ENCODE measurements at regions of chr11 and their contacts with region 1.

Region 1: DNA sequence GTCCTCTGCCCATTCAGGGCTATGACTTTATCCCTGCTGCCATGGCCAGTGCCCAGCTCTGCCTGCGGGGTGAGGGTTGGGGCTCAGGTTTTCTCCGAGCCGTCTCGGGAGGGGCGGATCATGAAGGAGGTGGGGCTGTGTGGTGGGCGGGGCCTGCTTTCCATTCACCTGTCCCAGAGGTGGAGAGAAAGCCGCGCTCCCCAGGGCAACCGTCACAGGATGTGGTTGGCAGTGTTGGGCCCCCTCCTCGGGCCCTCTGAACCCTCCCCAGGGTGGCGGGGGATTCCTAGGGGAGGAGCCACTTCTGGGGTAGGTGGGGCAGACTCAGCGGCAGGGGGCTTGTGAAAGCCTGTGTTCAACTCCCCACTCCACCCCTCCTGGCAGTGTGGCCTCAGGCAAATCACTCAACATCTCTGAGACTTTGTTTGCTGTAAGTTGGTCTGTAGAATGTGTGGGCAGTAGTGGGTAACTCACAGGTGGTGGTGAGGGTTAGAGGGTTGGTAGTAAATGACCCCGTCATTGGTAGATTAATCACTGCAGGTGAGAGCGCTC is 50.3 kb downstream of the CD6 start:
- DNase-seq: peak; percentile 94
- H3K4me3 Mint-ChIP-seq: peak overlapping the region; percentile 75
- H3K27ac Mint-ChIP-seq: peak overlapping the region; percentile 99
- H3K4me1 Mint-ChIP-seq: peaks cover 89% of the 10 kb centered on the region
- H3K27me3 Mint-ChIP-seq: no peaks in the 10 kb centered on the region

Region 2: DNA sequence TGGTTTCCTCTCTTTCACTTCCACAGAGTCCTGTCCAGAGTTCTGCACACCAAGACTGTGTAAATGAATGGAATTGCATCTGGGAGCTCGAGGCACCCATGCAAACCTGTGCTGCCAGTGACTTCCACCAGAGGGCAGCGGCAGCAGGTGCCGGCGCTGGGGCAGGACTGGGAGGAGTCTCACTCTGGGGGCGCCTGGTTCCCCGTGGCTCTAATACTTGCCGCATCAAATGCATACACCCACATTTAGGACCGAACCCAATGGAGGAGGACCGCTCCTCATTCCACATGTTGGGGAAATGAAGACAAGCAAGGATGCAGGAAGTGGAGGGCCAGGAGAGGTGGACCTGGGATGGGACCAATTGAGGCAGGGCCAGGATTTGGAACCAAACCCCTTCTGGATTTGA is 51.4 kb before region 1 on chr11:
- CTCF ChIA-PET with region 1: interaction called, 8 read pairs
- POLR2A ChIA-PET with region 1: interaction called, 18 read pairs
- intact Hi-C with region 1: loop called (anchors 2 kb)
- DNase-seq: peak; percentile 89
- H3K4me3 Mint-ChIP-seq: peak overlapping the region; percentile 95
- H3K27ac Mint-ChIP-seq: peak overlapping the region; percentile 99
- H3K4me1 Mint-ChIP-seq: peaks cover 15% of the 10 kb centered on the region
- H3K27me3 Mint-ChIP-seq: no peaks in the 10 kb centered on the region

Region 3: DNA sequence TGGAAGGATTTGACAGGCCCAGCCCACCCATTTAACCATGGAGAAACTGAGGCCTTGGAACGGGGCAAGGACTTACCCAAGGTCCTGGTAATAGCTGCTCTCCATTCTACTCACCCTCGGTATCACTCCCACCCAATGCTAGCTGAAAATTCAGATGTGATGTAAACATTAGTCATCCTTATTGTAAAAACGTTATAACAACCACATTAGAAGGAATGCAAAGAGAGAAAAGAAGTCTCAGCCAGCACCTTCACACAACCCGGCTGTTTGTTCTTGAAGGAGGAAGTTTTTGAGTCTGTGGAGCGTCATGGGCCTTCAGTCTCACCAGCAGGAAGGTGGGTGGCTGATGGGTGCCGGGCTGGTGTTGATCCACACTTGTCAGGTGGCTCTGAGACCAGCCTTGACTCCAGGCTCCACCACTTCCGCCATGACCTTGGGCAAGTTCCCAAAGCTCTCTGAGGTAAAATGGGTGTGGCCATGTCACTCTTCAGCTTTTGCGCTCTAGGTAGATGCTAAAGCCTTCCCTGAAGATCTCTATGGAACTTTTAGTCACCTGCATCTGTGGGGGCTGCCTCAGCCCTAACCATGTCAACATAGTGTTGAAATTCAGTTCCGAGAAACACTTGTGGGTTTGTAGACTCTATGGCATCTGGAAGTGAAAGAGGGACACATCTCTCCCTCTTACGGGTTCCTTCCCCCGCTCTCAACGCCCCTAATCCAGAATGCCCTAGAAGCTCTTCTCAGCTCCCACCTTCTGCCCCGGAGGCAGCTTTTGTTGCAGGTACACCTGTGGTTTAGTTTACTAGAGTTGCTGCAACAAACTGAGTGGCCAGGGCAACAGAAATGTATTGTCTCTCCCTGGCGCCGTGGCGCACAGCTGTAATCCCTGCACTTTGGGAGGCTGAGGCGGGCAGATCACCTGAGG is 35.5 kb before region 1 on chr11:
- CTCF ChIA-PET with region 1: no interaction called
- POLR2A ChIA-PET with region 1: interaction called, 36 read pairs
- intact Hi-C with region 1: loop called (anchors 2 kb)
- DNase-seq: peak; percentile 97
- H3K4me3 Mint-ChIP-seq: peak overlapping the region; percentile 84
- H3K27ac Mint-ChIP-seq: peak overlapping the region; percentile 99
- H3K4me1 Mint-ChIP-seq: peaks cover 91% of the 10 kb centered on the region
- H3K27me3 Mint-ChIP-seq: no peaks in the 10 kb centered on the region

Region 4: GRCh38 chr11:61004180-61004611 is 17.5 kb before region 1 on chr11:
- CTCF ChIA-PET with region 1: interaction called, 4 read pairs
- POLR2A ChIA-PET with region 1: interaction called, 19 read pairs
- intact Hi-C with region 1: loop called (anchors 1 kb)
- DNase-seq: peak; percentile 75
- H3K4me3 Mint-ChIP-seq: peak overlapping the region; percentile 75
- H3K27ac Mint-ChIP-seq: peak overlapping the region; percentile 97
- H3K4me1 Mint-ChIP-seq: peaks cover 82% of the 10 kb centered on the region
- H3K27me3 Mint-ChIP-seq: no peaks in the 10 kb centered on the region

Region 5: GRCh38 chr11:61054927-61055562 is 33.3 kb after region 1 on chr11:
- CTCF ChIA-PET with region 1: no interaction called
- POLR2A ChIA-PET with region 1: interaction called, 27 read pairs
- intact Hi-C with region 1: loop called (anchors 2 kb)
- DNase-seq: peak; percentile 88
- H3K4me3 Mint-ChIP-seq: peak overlapping the region; percentile 46
- H3K27ac Mint-ChIP-seq: peak overlapping the region; percentile 95
- H3K4me1 Mint-ChIP-seq: peaks cover 89% of the 10 kb centered on the region
- H3K27me3 Mint-ChIP-seq: no peaks in the 10 kb centered on the region

Region 6: GRCh38 chr11:61129639-61130523 is 108.1 kb after region 1 on chr11:
- CTCF ChIA-PET with region 1: interaction called, 13 read pairs
- POLR2A ChIA-PET with region 1: interaction called, 4 read pairs
- intact Hi-C with region 1: no loop called
- DNase-seq: peak; percentile 95
- H3K4me3 Mint-ChIP-seq: peak overlapping the region; percentile 17
- H3K27ac Mint-ChIP-seq: peak overlapping the region; percentile 57
- H3K4me1 Mint-ChIP-seq: peaks cover 25% of the 10 kb centered on the region
- H3K27me3 Mint-ChIP-seq: no peaks in the 10 kb centered on the region

Measured in activated CD4-positive, alpha-beta memory T cell treated with anti-CD3 and anti-CD28 coated beads for 36 hours (primary cell).